Activated naive CD8-positive, alpha-beta T cell treated with anti-CD3 and anti-CD28 coated beads, Interleukin-2, amount 10 ng/mL, durations not matched to agents 7 days and 5 days (primary cell): ENCODE measurements at regions of chrX and their contacts with region 1.

Region 1: GRCh38 chrX:154490414-154491083 is at the start of gene SLC10A3:
- DNase-seq: peak; percentile 87
- ATAC-seq: peak; percentile 87
- H3K4me3 Mint-ChIP-seq: peak within 1 kb of the TSS; percentile 90
- H3K27ac Mint-ChIP-seq: peak within 1 kb of the TSS; percentile 92
- H3K4me1 Mint-ChIP-seq: peaks cover 6% of the 10 kb centered on the region
- H3K27me3 Mint-ChIP-seq: no peaks in the 10 kb centered on the region
- total RNA-seq, gene SLC10A3: 25.3 to 27.3 TPM

Region 2: GRCh38 chrX:154397819-154398724 is 92.5 kb before region 1 on chrX and contains the start of gene RPL10:
- POLR2A ChIA-PET with region 1: interaction called, 17 read pairs
- DNase-seq: peak; percentile 87
- ATAC-seq: peak; percentile 86
- H3K4me3 Mint-ChIP-seq: peak within 1 kb of the TSS; percentile 97
- H3K27ac Mint-ChIP-seq: peak within 1 kb of the TSS; percentile 100
- H3K4me1 Mint-ChIP-seq: peaks cover 5% of the 10 kb centered on the region
- H3K27me3 Mint-ChIP-seq: no peaks in the 10 kb centered on the region
- total RNA-seq, gene RPL10: 2,867 to 2,975 TPM

Region 3: GRCh38 chrX:154428176-154429010 is 62.2 kb before region 1 on chrX and contains the start of gene ATP6AP1:
- POLR2A ChIA-PET with region 1: interaction called, 11 read pairs
- DNase-seq: peak; percentile 86
- ATAC-seq: peak; percentile 99
- H3K4me3 Mint-ChIP-seq: peak within 1 kb of the TSS; percentile 80
- H3K27ac Mint-ChIP-seq: peak within 1 kb of the TSS; percentile 77
- H3K4me1 Mint-ChIP-seq: peaks cover 28% of the 10 kb centered on the region
- H3K27me3 Mint-ChIP-seq: no peaks in the 10 kb centered on the region
- total RNA-seq, gene ATP6AP1: 46.9 to 51.1 TPM

Region 4: GRCh38 chrX:154478728-154479622 is 11.6 kb before region 1 on chrX and contains the start of gene LAGE3:
- POLR2A ChIA-PET with region 1: interaction called, 15 read pairs
- DNase-seq: peak; percentile 98
- ATAC-seq: peak; percentile 94
- H3K4me3 Mint-ChIP-seq: peak within 1 kb of the TSS; percentile 85
- H3K27ac Mint-ChIP-seq: peak within 1 kb of the TSS; percentile 94
- H3K4me1 Mint-ChIP-seq: peaks cover 13% of the 10 kb centered on the region
- H3K27me3 Mint-ChIP-seq: no peaks in the 10 kb centered on the region
- total RNA-seq, gene LAGE3: 32.2 to 34.8 TPM

Region 5: GRCh38 chrX:154547245-154548027 is 56.9 kb after region 1 on chrX and contains the start of gene IKBKG:
- POLR2A ChIA-PET with region 1: interaction called, 10 read pairs
- DNase-seq: peak; percentile 93
- ATAC-seq: peak; percentile 79
- H3K4me3 Mint-ChIP-seq: peak within 1 kb of the TSS; percentile 96
- H3K27ac Mint-ChIP-seq: peak within 1 kb of the TSS; percentile 84
- H3K4me1 Mint-ChIP-seq: peaks cover 34% of the 10 kb centered on the region
- H3K27me3 Mint-ChIP-seq: no peaks in the 10 kb centered on the region
- total RNA-seq, gene IKBKG: 56.1 to 61.7 TPM